Right cardiac atrium (tissue), 5 donors: ENCODE measurements at regions of chr18 and their contacts with region 1.

Region 1: GRCh38 chr18:74661691-74662090 is 64.0 kb downstream of the ZNF407 start:
- DNase-seq: no peak
- ATAC-seq: no peak
- H3K4me3 ChIP-seq: no peak overlapping the region
- H3K27ac ChIP-seq: no peak overlapping the region
- H3K4me1 ChIP-seq: no peaks in the 10 kb centered on the region
- H3K27me3 ChIP-seq: no peaks in the 10 kb centered on the region

Region 2: DNA sequence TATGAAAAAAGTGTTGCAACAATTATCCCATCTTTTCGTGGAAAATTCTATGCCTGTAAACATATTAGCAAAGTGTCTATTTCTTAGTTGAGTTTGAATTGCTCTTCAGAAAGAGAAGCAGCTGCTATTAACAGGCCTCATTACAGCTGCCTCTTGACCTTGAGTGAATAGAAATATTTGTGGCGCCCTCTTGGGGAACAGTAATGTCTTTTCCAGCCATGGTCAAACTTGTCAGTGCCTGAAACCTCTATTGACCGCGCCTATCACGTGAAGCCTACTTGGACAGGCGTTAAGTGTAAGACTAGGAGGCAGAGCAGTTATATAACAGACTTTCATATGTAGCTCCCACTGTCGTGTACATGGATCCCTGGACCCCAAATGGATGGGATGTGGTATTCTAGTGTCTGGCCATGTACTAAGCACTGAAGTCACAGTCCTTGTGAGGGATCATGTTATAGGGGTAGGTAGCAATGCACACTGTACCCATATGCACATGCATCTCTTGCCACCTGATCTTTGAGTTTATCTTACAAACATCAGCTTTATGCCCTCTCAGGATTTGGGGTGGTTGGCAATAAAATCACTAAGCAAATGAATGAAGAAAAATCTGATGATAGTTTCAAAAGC is 302.2 kb after region 1 on chr18:
- intact Hi-C with region 1: loop called in 2 of 4 experiments (anchors 10 kb)
- DNase-seq: peak in 1 of 3 donors; percentile 42
- ATAC-seq: peak; percentile 79 to 82
- H3K4me3 ChIP-seq: no peak overlapping the region
- H3K27ac ChIP-seq: no peak overlapping the region
- H3K4me1 ChIP-seq: no peaks in the 10 kb centered on the region
- H3K27me3 ChIP-seq: no peaks in the 10 kb centered on the region